CD4-positive, alpha-beta T cell (primary cell): ENCODE measurements at regions of chr11 and their contacts with region 1.

Region 1: DNA sequence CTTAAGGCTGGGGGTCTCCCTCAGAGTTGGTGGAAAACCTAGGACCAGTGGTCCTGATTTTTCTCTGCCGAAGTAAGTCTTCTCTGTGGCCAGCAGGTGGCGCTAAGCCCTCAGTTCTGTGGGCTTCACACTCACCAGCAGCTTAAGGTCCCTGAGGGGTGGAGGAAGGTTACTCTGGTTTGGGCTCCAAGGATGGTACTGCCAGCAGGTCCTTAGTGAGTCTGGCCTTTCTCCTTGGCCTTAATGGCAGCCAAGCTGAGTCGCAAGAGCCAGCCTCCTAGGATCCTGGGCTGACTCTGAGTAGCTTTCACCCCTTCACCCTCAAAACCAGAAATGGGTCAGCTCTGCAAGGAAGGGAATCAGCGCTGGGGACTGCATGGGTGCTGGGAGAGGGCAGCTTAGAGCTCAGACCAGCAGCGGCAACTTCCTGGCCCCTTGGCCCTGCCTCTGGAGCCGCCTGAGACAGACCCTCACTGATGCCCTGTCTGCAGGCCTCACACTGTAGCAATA is 4.4 kb downstream of the KCNJ11 start:
- DNase-seq: peak; percentile 65 to 90 (median 74)
- ATAC-seq: peak; percentile 65
- H3K4me3 ChIP-seq: no peak overlapping the region
- H3K4me3 Mint-ChIP-seq: no peak overlapping the region
- H3K27ac ChIP-seq: no peak overlapping the region
- H3K27ac Mint-ChIP-seq: no peak overlapping the region
- H3K4me1 ChIP-seq: peaks cover 10% of the 10 kb centered on the region
- H3K4me1 Mint-ChIP-seq: no peaks in the 10 kb centered on the region
- H3K27me3 ChIP-seq: no peaks in the 10 kb centered on the region
- H3K27me3 Mint-ChIP-seq: no peaks in the 10 kb centered on the region
- CTCF ChIP-seq: peak; percentile 88

Region 2: DNA sequence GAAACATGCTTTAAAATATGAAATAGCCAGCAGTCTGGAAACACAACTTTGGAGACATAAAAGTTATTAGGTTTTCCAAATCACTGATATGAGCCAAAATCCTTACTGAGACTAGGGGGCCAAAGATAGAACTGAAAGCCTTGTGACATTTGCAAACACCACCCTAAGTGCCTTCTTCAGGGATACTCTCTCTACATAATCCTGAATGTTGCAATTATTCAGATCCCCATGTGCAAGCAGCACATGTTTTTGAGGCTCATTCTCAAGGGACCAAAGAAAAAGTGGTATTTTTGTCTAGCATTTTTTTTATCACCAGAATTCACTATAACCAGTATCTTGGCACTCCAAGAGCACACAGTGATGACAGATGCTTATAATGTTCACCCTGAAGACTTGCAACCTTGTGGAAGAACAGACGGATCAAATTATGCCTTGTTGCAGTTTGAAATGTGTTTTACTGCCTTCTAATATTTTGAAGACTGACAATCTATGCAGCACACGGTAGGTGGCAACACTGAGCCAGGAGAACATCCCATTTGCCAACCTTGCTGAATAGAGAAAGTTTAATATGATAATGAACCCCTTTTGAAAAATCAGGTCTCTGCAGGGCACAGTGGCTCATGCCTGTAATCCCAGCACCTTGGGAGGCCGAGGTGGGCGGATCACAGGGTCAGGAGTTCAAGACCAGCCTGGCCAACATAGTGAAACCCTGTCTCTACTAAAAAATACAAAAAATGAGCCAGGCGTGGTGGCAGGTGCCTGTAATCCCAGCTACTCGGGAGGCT is 448.3 kb before region 1 on chr11:
- CTCF ChIA-PET with region 1: no interaction called
- POLR2A ChIA-PET with region 1: no interaction called
- intact Hi-C with region 1: loop called in 1 of 2 experiments (anchors 5 kb)
- DNase-seq: peak in 4 of 14 experiments; percentile 19 to 42 (median 31)
- ATAC-seq: no peak
- H3K4me3 ChIP-seq: no peak overlapping the region
- H3K4me3 Mint-ChIP-seq: no peak overlapping the region
- H3K27ac ChIP-seq: no peak overlapping the region
- H3K27ac Mint-ChIP-seq: no peak overlapping the region
- H3K4me1 ChIP-seq: no peaks in the 10 kb centered on the region
- H3K4me1 Mint-ChIP-seq: no peaks in the 10 kb centered on the region
- H3K27me3 ChIP-seq: no peaks in the 10 kb centered on the region
- H3K27me3 Mint-ChIP-seq: peaks cover 8% of the 10 kb centered on the region
- CTCF ChIP-seq: peak; percentile 25

Region 3: DNA sequence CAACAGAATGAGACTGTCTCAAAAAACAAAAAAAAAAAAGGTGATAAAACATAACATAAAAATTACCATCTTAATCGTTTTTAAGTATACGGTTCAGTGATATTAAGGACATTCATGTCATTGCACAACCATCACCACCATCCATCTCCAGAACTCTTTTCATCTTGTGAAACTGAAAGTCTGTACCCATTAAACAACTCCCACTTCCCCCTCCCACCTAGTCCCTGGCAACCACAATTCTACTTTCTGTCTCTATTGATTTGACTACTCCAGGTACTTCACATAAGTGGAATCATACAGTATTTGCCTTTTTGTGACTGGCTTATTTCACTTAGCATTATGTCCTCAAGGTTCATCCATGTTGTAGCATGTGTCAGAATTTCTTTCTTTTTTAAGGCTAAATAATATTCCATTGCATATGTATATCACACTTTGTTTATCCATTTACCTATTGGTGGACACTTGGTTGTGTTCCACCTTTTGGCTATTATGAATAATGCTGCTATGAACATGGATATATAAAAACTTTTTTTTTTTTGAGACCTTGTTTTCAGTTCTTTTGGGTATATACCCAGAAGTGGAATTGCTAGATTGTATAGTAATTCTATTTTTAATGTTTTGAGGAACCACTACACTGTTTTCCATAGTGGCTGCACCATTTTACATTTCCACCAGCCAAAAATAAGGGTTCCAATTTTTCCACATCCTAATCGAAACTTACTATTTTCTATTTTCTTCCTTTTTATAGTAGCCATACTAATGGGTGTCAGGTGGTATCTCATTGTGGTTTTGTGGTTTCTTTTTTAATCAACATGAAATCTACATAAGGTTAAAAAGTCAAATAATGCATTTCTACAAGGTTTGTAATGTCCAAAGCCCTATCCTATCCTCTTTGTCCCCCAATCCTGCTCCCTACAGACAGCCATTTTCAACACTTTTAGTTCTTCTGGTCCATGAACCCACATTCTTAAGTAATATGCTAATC is 152.9 kb before region 1 on chr11:
- CTCF ChIA-PET with region 1: interaction called, 6 read pairs
- POLR2A ChIA-PET with region 1: interaction called, 3 read pairs
- intact Hi-C with region 1: loop called (anchors 1 kb)
- DNase-seq: peak in 3 of 14 experiments; percentile 50 to 57 (median 54)
- ATAC-seq: peak; percentile 68
- H3K4me3 ChIP-seq: no peak overlapping the region
- H3K4me3 Mint-ChIP-seq: no peak overlapping the region
- H3K27ac ChIP-seq: no peak overlapping the region
- H3K27ac Mint-ChIP-seq: no peak overlapping the region
- H3K4me1 ChIP-seq: peaks cover 9% of the 10 kb centered on the region
- H3K4me1 Mint-ChIP-seq: peaks cover 16% of the 10 kb centered on the region
- H3K27me3 ChIP-seq: no peaks in the 10 kb centered on the region
- H3K27me3 Mint-ChIP-seq: no peaks in the 10 kb centered on the region
- CTCF ChIP-seq: no peak

Region 4: GRCh38 chr11:17354601-17354991 is 29.5 kb before region 1 on chr11:
- CTCF ChIA-PET with region 1: interaction called, 11 read pairs
- POLR2A ChIA-PET with region 1: interaction called, 4 read pairs
- intact Hi-C with region 1: loop called in 1 of 2 experiments (anchors 2 kb)
- DNase-seq: peak; percentile 13 to 81 (median 38)
- ATAC-seq: peak; percentile 15
- H3K4me3 ChIP-seq: no peak overlapping the region
- H3K4me3 Mint-ChIP-seq: peak overlapping the region; percentile 93
- H3K27ac ChIP-seq: no peak overlapping the region
- H3K27ac Mint-ChIP-seq: peak overlapping the region; percentile 72
- H3K4me1 ChIP-seq: peaks cover 21% of the 10 kb centered on the region
- H3K4me1 Mint-ChIP-seq: peaks cover 35% of the 10 kb centered on the region
- H3K27me3 ChIP-seq: no peaks in the 10 kb centered on the region
- H3K27me3 Mint-ChIP-seq: no peaks in the 10 kb centered on the region
- CTCF ChIP-seq: peak; percentile 82

Region 5: GRCh38 chr11:17528181-17528691 is 144.2 kb after region 1 on chr11:
- CTCF ChIA-PET with region 1: interaction called, 10 read pairs
- POLR2A ChIA-PET with region 1: interaction called, 3 read pairs
- intact Hi-C with region 1: no loop called
- DNase-seq: peak; percentile 10 to 53 (median 24)
- ATAC-seq: peak; percentile 64
- H3K4me3 ChIP-seq: no peak overlapping the region
- H3K4me3 Mint-ChIP-seq: no peak overlapping the region
- H3K27ac ChIP-seq: no peak overlapping the region
- H3K27ac Mint-ChIP-seq: no peak overlapping the region
- H3K4me1 ChIP-seq: no peaks in the 10 kb centered on the region
- H3K4me1 Mint-ChIP-seq: no peaks in the 10 kb centered on the region
- H3K27me3 ChIP-seq: peaks cover 0 to 3% of the 10 kb centered on the region in 2 experiments
- H3K27me3 Mint-ChIP-seq: peaks cover 9% of the 10 kb centered on the region
- CTCF ChIP-seq: peak; percentile 27

Region 6: GRCh38 chr11:17650127-17650911 is 266.3 kb after region 1 on chr11:
- CTCF ChIA-PET with region 1: no interaction called
- POLR2A ChIA-PET with region 1: no interaction called
- intact Hi-C with region 1: no loop called
- DNase-seq: no peak
- ATAC-seq: no peak
- H3K4me3 ChIP-seq: no peak overlapping the region
- H3K4me3 Mint-ChIP-seq: no peak overlapping the region
- H3K27ac ChIP-seq: no peak overlapping the region
- H3K27ac Mint-ChIP-seq: no peak overlapping the region
- H3K4me1 ChIP-seq: no peaks in the 10 kb centered on the region
- H3K4me1 Mint-ChIP-seq: no peaks in the 10 kb centered on the region
- H3K27me3 ChIP-seq: peaks cover 38 to 47% of the 10 kb centered on the region in 2 experiments
- H3K27me3 Mint-ChIP-seq: peaks cover 74% of the 10 kb centered on the region
- CTCF ChIP-seq: no peak